Endothelial cell of umbilical vein (primary cell): ENCODE measurements at regions of chr7 and their contacts with region 1.

Region 1: DNA sequence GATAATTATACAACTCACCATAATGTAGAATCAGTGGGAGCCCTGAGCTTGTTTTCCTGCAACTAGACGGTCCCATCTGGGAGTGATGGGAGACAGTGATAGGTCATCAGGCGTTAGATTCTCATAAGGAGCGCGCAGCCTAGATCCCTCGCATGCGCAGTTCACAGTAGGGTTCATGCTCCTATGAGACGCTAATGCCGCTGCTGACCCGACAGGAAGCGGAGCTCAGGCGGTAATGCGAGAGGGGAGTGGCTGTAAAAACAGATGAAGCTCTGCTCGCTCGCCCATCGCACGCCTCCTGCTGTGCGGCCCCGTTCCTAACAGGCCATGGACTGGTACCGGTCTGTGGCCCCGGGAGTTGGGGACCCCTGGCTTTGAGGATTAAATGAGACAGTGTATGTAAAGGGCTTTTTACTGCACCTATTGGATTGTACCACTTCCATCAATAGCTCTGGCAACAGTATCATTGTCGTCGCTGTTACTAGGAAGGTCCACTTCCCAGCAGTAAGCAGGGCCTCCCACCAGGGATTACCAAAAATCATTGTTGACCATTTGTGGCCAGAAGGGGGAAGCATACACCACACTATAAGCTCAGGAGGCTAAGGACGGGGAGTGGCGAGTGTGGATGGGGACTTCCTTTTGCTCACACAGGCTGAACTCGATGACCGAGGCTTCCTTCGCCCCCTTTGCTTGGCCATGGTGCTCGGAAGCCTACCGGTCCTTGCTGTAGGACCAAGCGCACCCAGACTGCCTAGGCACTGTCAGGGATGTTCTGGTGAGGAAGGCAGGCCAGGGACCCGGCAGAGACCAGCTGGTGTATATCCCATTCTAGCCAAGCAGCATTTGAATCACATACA is 26.4 kb downstream of the AKR1B1 start:
- DNase-seq: peak; percentile 93
- H3K4me3 ChIP-seq: peak overlapping the region in 2 of 3 experiments; percentile 31 to 44
- H3K27ac ChIP-seq: peak overlapping the region; percentile 45
- H3K4me1 ChIP-seq: peaks cover 9% of the 10 kb centered on the region
- H3K27me3 ChIP-seq: no peaks in the 10 kb centered on the region
- CTCF ChIP-seq: peak; percentile 41 to 67
- POLR2A ChIP-seq: peak; percentile 32

Region 2: GRCh38 chr7:134351424-134351823 is 81.1 kb before region 1 on chr7:
- CTCF ChIA-PET with region 1: no interaction called
- POLR2A ChIA-PET with region 1: no interaction called
- dilution Hi-C with region 1: no loop called
- intact Hi-C with region 1: no loop called
- DNase-seq: no peak
- H3K4me3 ChIP-seq: no peak overlapping the region
- H3K27ac ChIP-seq: no peak overlapping the region
- H3K4me1 ChIP-seq: no peaks in the 10 kb centered on the region
- H3K27me3 ChIP-seq: peaks cover 2 to 9% of the 10 kb centered on the region in 2 experiments
- CTCF ChIP-seq: no peak
- POLR2A ChIP-seq: no peak

Region 3: GRCh38 chr7:134448700-134449229 is 16.2 kb after region 1 on chr7:
- CTCF ChIA-PET with region 1: interaction called, 36 read pairs
- POLR2A ChIA-PET with region 1: no interaction called
- dilution Hi-C with region 1: no loop called
- intact Hi-C with region 1: no loop called
- DNase-seq: peak; percentile 64
- H3K4me3 ChIP-seq: no peak overlapping the region
- H3K27ac ChIP-seq: peak overlapping the region; percentile 86
- H3K4me1 ChIP-seq: peaks cover 22% of the 10 kb centered on the region
- H3K27me3 ChIP-seq: no peaks in the 10 kb centered on the region
- CTCF ChIP-seq: no peak
- POLR2A ChIP-seq: no peak

Region 4: GRCh38 chr7:134502463-134503371 is 70.2 kb after region 1 on chr7:
- CTCF ChIA-PET with region 1: interaction called, 13 read pairs
- POLR2A ChIA-PET with region 1: no interaction called
- dilution Hi-C with region 1: no loop called
- intact Hi-C with region 1: no loop called
- DNase-seq: no peak
- H3K4me3 ChIP-seq: no peak overlapping the region
- H3K27ac ChIP-seq: no peak overlapping the region
- H3K4me1 ChIP-seq: peaks cover 13% of the 10 kb centered on the region
- H3K27me3 ChIP-seq: no peaks in the 10 kb centered on the region
- CTCF ChIP-seq: no peak
- POLR2A ChIP-seq: no peak

Region 5: DNA sequence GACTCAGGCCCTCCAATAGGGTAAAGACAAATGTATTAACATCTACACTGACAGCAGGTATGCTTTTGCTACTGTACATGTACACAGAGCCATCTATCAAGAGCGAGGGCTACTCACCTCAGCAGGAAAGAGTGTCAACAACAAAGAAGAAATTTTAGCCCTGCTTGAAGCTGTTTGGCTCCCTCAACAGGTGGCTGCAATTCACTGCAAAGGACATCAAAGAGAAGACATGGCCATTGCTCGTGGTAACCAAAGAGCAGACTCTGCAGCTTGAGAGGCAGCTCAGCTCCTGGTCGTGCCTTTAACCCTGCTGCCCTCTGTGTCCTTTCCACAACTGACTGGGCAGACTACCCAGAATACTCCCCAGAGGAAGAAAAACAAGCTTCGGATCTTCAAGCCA is 121.5 kb after region 1 on chr7:
- CTCF ChIA-PET with region 1: interaction called, 115 read pairs
- POLR2A ChIA-PET with region 1: no interaction called
- dilution Hi-C with region 1: no loop called
- intact Hi-C with region 1: no loop called
- DNase-seq: no peak
- H3K4me3 ChIP-seq: no peak overlapping the region
- H3K27ac ChIP-seq: no peak overlapping the region
- H3K4me1 ChIP-seq: no peaks in the 10 kb centered on the region
- H3K27me3 ChIP-seq: peaks cover 0 to 11% of the 10 kb centered on the region in 2 experiments
- CTCF ChIP-seq: peak in 1 of 2 donors; percentile 10
- POLR2A ChIP-seq: no peak

Region 6: GRCh38 chr7:134701272-134701671 is 268.7 kb after region 1 on chr7:
- CTCF ChIA-PET with region 1: interaction called, 7 read pairs
- POLR2A ChIA-PET with region 1: no interaction called
- dilution Hi-C with region 1: no loop called
- intact Hi-C with region 1: loop called (anchors 2 kb)
- DNase-seq: peak; percentile 55
- H3K4me3 ChIP-seq: no peak overlapping the region
- H3K27ac ChIP-seq: no peak overlapping the region
- H3K4me1 ChIP-seq: peaks cover 13% of the 10 kb centered on the region
- H3K27me3 ChIP-seq: no peaks in the 10 kb centered on the region
- CTCF ChIP-seq: peak; percentile 54 to 55
- POLR2A ChIP-seq: no peak